ENCODE measurements at regions of chr5 and their contacts with region 1.

Region 1: GRCh38 chr5:111550279-111551020 is 38.1 kb upstream of the STARD4 start:
- DNase-seq: peak; percentile 76 to 83
- ATAC-seq: peak; percentile 93 to 99 (median 99)
- H3K4me3 ChIP-seq: no peak overlapping the region
- H3K27ac ChIP-seq: peak overlapping the region; percentile 75
- H3K4me1 ChIP-seq: peaks cover 8% of the 10 kb centered on the region
- H3K27me3 ChIP-seq: no peaks in the 10 kb centered on the region
- CTCF ChIP-seq: peak; percentile 76

Region 2: GRCh38 chr5:111680737-111681413 is 130.4 kb after region 1 on chr5:
- intact Hi-C with region 1: loop called in 1 of 2 experiments (anchors 2 kb)
- DNase-seq: peak; percentile 18 to 66
- ATAC-seq: peak; percentile 86 to 98 (median 92)
- H3K4me3 ChIP-seq: no peak overlapping the region
- H3K27ac ChIP-seq: peak overlapping the region; percentile 57
- H3K4me1 ChIP-seq: peaks cover 18% of the 10 kb centered on the region
- H3K27me3 ChIP-seq: no peaks in the 10 kb centered on the region
- CTCF ChIP-seq: no peak

Region 3: GRCh38 chr5:111752426-111752965 is 202.0 kb after region 1 on chr5:
- intact Hi-C with region 1: loop called (anchors 5 kb)
- DNase-seq: no peak
- ATAC-seq: no peak
- H3K4me3 ChIP-seq: no peak overlapping the region
- H3K27ac ChIP-seq: peak overlapping the region; percentile 10
- H3K4me1 ChIP-seq: peaks cover 68% of the 10 kb centered on the region
- H3K27me3 ChIP-seq: no peaks in the 10 kb centered on the region
- CTCF ChIP-seq: no peak

Region 4: DNA sequence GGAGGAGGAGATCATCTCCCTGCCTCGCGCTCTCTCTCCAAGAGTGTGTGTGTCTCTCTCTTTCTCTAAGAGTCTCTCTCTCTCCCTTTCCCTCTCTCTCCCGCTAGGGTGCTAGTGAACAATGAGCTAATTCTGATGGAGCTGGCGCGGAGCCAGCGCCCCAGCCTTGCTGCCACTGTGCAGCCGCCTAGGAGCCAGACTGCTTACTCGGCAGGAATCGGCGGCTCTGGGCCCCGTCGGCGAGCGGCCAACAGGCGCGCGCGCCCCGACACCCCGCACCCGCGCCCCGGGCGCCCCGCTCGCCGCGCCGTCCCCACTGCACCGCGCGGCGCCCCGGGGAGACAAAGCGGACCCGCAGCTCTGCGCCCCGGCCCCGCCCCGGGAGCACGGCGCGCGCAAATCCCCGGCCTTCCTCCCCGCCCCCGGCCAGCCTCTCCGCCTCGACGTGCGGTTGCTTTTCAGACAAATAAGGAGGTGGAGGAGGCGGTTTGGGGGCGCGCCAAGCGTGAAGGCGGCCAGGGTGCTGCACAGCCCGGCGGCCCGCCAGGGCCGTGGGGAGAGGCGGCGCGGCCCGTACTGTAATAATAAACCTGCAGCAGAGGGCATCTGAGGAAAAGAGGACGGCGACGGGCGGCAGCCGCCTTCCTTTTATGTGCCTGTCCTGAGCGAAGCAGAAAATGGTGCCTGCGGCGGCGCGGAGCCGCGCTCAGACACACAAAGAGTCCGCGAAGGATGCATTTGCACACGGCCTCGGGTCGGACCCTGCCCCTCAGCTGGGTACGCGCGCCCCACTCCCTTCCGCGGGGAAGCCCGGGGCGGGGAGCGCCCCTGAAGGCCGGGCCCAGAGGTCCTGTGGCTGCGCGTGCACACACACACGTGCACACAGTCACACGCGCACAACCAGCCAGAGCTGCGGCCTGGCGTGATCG is 207.2 kb after region 1 on chr5:
- intact Hi-C with region 1: loop called (anchors 5 kb)
- DNase-seq: peak; percentile 93 to 96
- ATAC-seq: peak; percentile 85 to 92 (median 88)
- H3K4me3 ChIP-seq: peak overlapping the region; percentile 78
- H3K27ac ChIP-seq: peak overlapping the region; percentile 90
- H3K4me1 ChIP-seq: peaks cover 36% of the 10 kb centered on the region
- H3K27me3 ChIP-seq: no peaks in the 10 kb centered on the region
- CTCF ChIP-seq: peak; percentile 28

Region 5: GRCh38 chr5:111853748-111854147 is 303.3 kb after region 1 on chr5:
- intact Hi-C with region 1: loop called in 1 of 2 experiments (anchors 10 kb)
- DNase-seq: no peak
- ATAC-seq: no peak
- H3K4me3 ChIP-seq: no peak overlapping the region
- H3K27ac ChIP-seq: no peak overlapping the region
- H3K4me1 ChIP-seq: no peaks in the 10 kb centered on the region
- H3K27me3 ChIP-seq: no peaks in the 10 kb centered on the region
- CTCF ChIP-seq: no peak

Measured in psoas muscle (tissue), 8 donors.